Heart right ventricle (tissue), 16 donors: ENCODE measurements at regions of chr2 and their contacts with region 1.

Region 1: GRCh38 chr2:100813527-100813926 is 6.4 kb upstream of the NPAS2 start:
- DNase-seq: no peak
- ATAC-seq: peak; percentile 62 to 89 (median 76)
- H3K4me3 ChIP-seq: no peak overlapping the region
- H3K27ac ChIP-seq: peak overlapping the region in 9 of 10 donors; percentile 34 to 72 (median 58)
- H3K4me1 ChIP-seq: peaks cover 2 to 56% (median 40%) of the 10 kb centered on the region in 9 donors
- H3K27me3 ChIP-seq: peaks cover 0 to 17% (median 0%) of the 10 kb centered on the region in 7 donors
- CTCF ChIP-seq: no peak

Region 2: DNA sequence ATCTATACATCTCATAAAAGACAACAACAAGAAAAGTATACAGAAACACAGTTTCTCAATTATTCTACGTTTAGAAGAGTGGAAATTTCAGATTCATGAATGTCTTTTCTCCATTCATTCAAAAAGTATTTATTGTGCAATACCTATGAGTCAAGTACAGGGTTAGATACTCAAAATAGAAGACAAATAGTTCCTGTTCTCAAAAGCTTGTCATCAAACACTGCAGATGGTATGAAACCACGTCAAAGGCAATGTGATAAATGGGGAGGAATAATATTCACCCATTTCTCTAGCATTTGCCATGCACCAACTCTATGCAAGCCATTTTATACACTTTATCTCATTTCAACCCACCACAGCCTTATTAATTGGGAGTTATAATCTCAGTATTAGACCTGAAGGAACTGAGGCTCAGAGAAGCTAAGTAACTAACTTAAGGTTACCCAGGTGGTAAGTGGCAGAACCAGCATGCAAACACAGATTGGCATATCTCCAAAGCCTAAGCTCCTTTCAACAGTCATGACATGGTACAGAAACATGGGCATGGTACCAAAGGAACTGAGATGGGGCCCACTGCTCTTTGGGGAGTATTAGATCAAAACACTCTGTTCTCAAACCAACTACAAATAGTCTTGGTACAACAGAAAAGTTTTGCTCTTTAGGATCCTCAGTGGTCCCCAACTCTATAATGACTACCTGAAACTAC is 60.7 kb before region 1 on chr2:
- intact Hi-C with region 1: loop called in 4 of 10 experiments (anchors 2 to 5 kb)
- DNase-seq: no peak
- ATAC-seq: peak in 7 of 8 donors; percentile 39 to 87 (median 69)
- H3K4me3 ChIP-seq: no peak overlapping the region
- H3K27ac ChIP-seq: peak overlapping the region in 3 of 10 donors; percentile 12 to 56 (median 17)
- H3K4me1 ChIP-seq: peaks cover 0 to 41% (median 20%) of the 10 kb centered on the region in 9 donors
- H3K27me3 ChIP-seq: no peaks in the 10 kb centered on the region
- CTCF ChIP-seq: no peak

Region 3: GRCh38 chr2:100780203-100781008 is 33.1 kb before region 1 on chr2:
- intact Hi-C with region 1: loop called in 1 of 10 experiments (anchors 1 kb)
- DNase-seq: peak in 1 of 2 donors; percentile 16
- ATAC-seq: peak; percentile 41 to 90 (median 84)
- H3K4me3 ChIP-seq: no peak overlapping the region
- H3K27ac ChIP-seq: peak overlapping the region in 2 of 10 donors; percentile 33 to 40
- H3K4me1 ChIP-seq: peaks cover 0 to 22% (median 14%) of the 10 kb centered on the region in 9 donors
- H3K27me3 ChIP-seq: no peaks in the 10 kb centered on the region
- CTCF ChIP-seq: no peak

Region 4: DNA sequence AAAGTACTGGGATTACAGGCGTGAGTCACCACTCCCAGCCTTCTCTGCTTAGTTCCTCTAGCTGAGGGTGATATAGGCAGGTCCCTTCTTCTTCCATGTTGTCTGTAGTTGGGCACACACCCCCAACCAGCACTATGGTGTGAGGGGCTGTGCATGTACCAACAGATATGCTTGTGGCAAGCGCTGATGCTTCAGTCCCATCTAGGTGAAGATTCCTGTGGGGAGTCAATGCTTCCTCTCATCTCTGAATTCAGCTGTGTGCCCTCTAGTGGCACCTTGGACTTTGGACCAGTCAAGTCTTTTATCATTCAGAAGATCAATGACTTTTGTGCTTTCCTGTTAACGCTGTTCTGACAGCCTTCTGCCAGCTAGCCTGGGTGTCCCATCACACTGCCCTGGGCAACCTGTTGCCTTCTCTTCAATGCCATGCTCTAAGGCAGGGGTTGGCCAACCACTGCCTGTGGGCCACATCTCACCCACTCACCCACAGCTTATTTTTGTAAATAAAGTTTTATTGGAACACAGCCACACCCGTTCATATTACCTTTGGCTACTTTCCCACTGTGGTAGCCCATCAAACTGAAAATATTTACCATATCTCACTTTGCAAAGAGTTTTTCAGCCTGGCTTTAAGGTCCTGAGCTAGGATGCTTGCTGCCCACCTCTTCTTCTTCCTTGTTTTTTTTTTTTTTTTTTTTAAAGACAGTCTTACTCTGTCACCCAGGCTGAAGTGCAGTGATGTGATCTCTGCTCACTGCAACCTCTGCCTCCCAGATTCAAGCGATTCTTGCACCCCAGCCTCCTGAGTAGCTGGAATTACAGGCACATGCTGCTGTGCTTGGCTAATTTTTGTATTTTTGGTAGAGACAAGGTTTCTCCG is 57.4 kb after region 1 on chr2:
- intact Hi-C with region 1: no loop called
- DNase-seq: no peak
- ATAC-seq: peak in 1 of 8 donors; percentile 28
- H3K4me3 ChIP-seq: no peak overlapping the region
- H3K27ac ChIP-seq: no peak overlapping the region
- H3K4me1 ChIP-seq: peaks cover 0 to 7% (median 4%) of the 10 kb centered on the region in 9 donors
- H3K27me3 ChIP-seq: no peaks in the 10 kb centered on the region
- CTCF ChIP-seq: peak in 3 of 9 donors; percentile 15 to 29 (median 18)